ENCODE measurements at regions of chr1 and their contacts with region 1.

Region 1: DNA sequence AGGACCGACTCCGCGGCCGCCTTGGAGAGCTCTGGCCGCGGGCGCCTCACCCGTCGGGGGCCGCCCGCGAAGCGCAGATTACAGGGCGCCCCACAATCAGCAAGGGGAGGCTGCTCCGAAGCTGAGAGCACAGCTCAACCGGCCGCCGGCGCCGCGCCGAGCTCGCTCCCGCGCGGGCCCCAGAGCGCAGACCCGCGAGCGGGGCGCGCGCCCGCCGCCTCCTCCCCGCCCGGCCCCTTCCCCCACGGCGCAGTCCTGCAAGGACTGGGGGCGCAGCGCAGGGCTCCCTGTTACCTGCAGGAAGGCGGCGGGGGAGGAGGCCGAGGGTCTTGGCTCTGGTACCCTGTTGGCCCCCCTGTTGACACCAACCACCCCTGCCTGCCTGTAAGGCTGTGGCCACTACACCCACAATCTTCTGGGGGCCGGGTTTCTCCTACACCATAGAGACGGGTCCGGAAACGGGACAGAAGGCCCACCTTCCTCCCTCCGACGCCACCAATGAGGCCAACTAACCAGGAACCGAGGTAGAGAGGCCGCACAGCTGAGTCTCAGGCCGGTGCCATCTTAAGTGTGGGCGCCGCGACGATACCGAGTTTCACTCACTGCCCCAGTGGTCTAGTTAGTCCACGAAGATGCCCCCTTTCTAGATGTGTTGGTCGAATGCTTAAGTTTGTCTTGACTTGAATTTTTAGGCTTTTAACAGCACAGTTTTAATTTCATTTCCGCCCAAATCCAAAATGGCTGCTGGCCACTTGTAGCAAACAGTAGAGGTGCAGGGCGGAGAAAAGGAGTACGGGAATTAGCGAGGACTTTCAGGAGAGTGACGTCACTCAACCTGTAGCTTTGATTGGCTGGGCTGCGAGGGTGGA is at the start of gene SCYL3:
- DNase-seq: peak; percentile 97 to 98 (median 98)
- ATAC-seq: peak; percentile 95
- H3K4me3 ChIP-seq: peak within 1 kb of the TSS; percentile 69
- H3K27ac ChIP-seq: peak within 1 kb of the TSS; percentile 98
- H3K4me1 ChIP-seq: peaks cover 3 to 27% of the 10 kb centered on the region in 2 experiments
- H3K27me3 ChIP-seq: no peaks in the 10 kb centered on the region
- CTCF ChIP-seq: no peak
- EP300 ChIP-seq: no peak
- POLR2A ChIP-seq: peak; percentile 89
- RAD21 ChIP-seq: no peak; a peak in 1 of 4 replicates
- polyA plus RNA-seq, gene SCYL3: 3.6 to 5.7 TPM

Region 2: GRCh38 chr1:169485544-169486278 is 408.0 kb before region 1 on chr1 and contains the start of gene SLC19A2:
- CTCF ChIA-PET with region 1: no interaction called
- POLR2A ChIA-PET with region 1: no interaction called
- in situ Hi-C with region 1: no loop called
- intact Hi-C with region 1: loop called (anchors 5 kb)
- DNase-seq: peak; percentile 100
- ATAC-seq: peak; percentile 95
- H3K4me3 ChIP-seq: peak within 1 kb of the TSS; percentile 79
- H3K27ac ChIP-seq: peak within 1 kb of the TSS; percentile 89
- H3K4me1 ChIP-seq: peaks cover 13 to 23% of the 10 kb centered on the region in 2 experiments; a peak in 4 of 5 replicates
- H3K27me3 ChIP-seq: no peaks in the 10 kb centered on the region
- CTCF ChIP-seq: peak; percentile 58 to 72 (median 65)
- EP300 ChIP-seq: no peak
- POLR2A ChIP-seq: peak; percentile 96
- RAD21 ChIP-seq: peak; percentile 37 to 44
- polyA plus RNA-seq, gene SLC19A2: 7.4 to 8.9 TPM

Region 3: DNA sequence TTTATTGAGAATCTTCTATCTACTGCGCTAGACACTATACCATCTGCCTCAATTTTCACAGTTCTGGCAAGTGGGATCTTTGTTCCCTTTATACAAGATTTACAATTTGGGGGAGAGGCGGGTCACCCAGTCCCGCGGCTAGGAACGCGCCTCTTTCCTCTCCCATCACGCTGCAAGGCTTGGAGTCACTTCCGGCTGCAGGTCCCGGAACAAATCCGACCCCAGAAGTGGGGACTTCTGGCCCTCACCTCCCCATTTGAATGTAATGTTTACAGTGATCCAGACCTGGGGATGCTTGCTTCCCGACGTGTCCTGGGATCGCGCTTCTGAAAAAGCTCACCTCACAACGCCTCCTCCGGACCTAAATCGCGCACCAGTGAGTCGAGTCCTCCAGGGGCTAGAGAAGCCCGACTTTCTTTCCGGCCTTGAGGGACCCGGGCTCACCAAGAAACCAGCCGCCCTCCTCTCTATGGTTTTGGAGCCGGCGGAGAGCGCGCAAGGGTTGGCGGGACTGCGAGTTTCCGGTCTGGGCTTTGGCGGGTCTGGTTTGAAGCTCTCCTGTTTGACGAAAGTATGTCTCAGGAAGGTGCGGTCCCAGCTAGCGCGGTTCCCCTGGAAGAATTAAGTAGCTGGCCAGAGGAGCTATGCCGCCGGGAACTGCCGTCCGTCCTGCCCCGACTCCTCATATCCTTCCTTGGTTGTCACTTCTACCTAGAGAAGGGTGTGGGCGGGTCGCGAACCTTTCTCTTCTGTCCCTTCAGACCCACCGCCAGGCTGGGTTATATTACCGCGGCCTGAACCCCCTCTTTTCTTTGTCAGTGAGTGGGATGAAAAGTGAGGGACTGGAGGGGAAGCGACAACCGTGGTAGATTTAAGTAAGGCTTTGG is 99.0 kb before region 1 on chr1 and contains the start of gene METTL18:
- CTCF ChIA-PET with region 1: no interaction called
- POLR2A ChIA-PET with region 1: interaction called, 3 read pairs
- in situ Hi-C with region 1: no loop called
- intact Hi-C with region 1: loop called (anchors 1 kb)
- DNase-seq: peak; percentile 94 to 98 (median 95)
- ATAC-seq: peak; percentile 98
- H3K4me3 ChIP-seq: peak within 1 kb of the TSS; percentile 65
- H3K27ac ChIP-seq: peak within 1 kb of the TSS; percentile 85
- H3K4me1 ChIP-seq: peaks cover 0 to 8% of the 10 kb centered on the region in 2 experiments; a peak in 2 of 5 replicates
- H3K27me3 ChIP-seq: no peaks in the 10 kb centered on the region
- CTCF ChIP-seq: peak in 1 of 3 experiments; percentile 9; a peak in 1 of 6 replicates
- EP300 ChIP-seq: peak; percentile 59; the same call in 1 of the 2 replicates
- POLR2A ChIP-seq: peak; percentile 93
- RAD21 ChIP-seq: no peak
- polyA plus RNA-seq, gene METTL18: 36.4 to 40.2 TPM

Region 4: GRCh38 chr1:169906938-169907337 is 13.2 kb after region 1 on chr1:
- CTCF ChIA-PET with region 1: no interaction called
- POLR2A ChIA-PET with region 1: interaction called, 12 read pairs
- in situ Hi-C with region 1: no loop called
- intact Hi-C with region 1: no loop called
- DNase-seq: no peak
- ATAC-seq: no peak
- H3K4me3 ChIP-seq: no peak overlapping the region
- H3K27ac ChIP-seq: no peak overlapping the region
- H3K4me1 ChIP-seq: peaks cover 0 to 3% of the 10 kb centered on the region in 2 experiments; a peak in 1 of 5 replicates
- H3K27me3 ChIP-seq: peaks cover 0 to 5% of the 10 kb centered on the region in 2 experiments; a peak in 2 of 5 replicates
- CTCF ChIP-seq: no peak
- EP300 ChIP-seq: no peak
- POLR2A ChIP-seq: no peak
- RAD21 ChIP-seq: no peak

Region 5: GRCh38 chr1:170074250-170075157 is 180.8 kb after region 1 on chr1 and contains the start of gene KIFAP3:
- CTCF ChIA-PET with region 1: no interaction called
- POLR2A ChIA-PET with region 1: no interaction called
- in situ Hi-C with region 1: no loop called
- intact Hi-C with region 1: loop called (anchors 5 kb)
- DNase-seq: peak; percentile 95 to 100 (median 97)
- ATAC-seq: peak; percentile 99
- H3K4me3 ChIP-seq: peak within 1 kb of the TSS; percentile 59
- H3K27ac ChIP-seq: peak within 1 kb of the TSS; percentile 54
- H3K4me1 ChIP-seq: peaks cover 6% of the 10 kb centered on the region in 2 experiments; a peak in 4 of 5 replicates
- H3K27me3 ChIP-seq: no peaks in the 10 kb centered on the region
- CTCF ChIP-seq: peak; percentile 56 to 75 (median 75)
- EP300 ChIP-seq: no peak
- POLR2A ChIP-seq: peak; percentile 65
- RAD21 ChIP-seq: peak; percentile 56 to 65
- polyA plus RNA-seq, gene KIFAP3: 11.7 to 16.3 TPM

Region 6: DNA sequence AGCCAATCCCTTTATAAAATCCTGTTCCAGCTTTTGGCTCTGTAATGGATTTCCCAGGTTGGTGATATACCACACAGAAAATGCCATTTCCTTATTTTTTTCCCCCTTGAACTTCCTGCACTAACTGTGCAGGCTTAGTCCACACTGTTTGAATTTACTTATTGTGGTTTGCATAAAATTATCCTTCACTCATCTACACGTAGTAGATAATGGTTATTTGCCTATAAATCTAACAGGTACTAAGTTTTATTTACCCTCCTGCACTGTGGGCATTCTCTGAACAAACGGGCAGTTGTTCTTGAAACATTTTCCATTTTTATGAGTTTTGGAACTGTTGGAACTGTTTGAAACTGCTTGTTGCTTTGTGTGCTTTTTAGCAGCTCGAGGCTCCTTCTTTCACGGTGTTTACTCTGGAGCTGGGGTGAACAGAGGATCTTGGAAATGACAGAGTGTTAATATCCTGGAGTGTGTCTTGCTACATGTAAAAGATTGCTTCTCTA is 203.8 kb after region 1 on chr1:
- CTCF ChIA-PET with region 1: no interaction called
- POLR2A ChIA-PET with region 1: no interaction called
- in situ Hi-C with region 1: no loop called
- intact Hi-C with region 1: no loop called
- DNase-seq: no peak
- ATAC-seq: no peak
- H3K4me3 ChIP-seq: no peak overlapping the region
- H3K27ac ChIP-seq: no peak overlapping the region
- H3K4me1 ChIP-seq: no peaks in the 10 kb centered on the region
- H3K27me3 ChIP-seq: no peaks in the 10 kb centered on the region
- CTCF ChIP-seq: no peak
- EP300 ChIP-seq: no peak
- POLR2A ChIP-seq: no peak
- RAD21 ChIP-seq: no peak

Region 7: DNA sequence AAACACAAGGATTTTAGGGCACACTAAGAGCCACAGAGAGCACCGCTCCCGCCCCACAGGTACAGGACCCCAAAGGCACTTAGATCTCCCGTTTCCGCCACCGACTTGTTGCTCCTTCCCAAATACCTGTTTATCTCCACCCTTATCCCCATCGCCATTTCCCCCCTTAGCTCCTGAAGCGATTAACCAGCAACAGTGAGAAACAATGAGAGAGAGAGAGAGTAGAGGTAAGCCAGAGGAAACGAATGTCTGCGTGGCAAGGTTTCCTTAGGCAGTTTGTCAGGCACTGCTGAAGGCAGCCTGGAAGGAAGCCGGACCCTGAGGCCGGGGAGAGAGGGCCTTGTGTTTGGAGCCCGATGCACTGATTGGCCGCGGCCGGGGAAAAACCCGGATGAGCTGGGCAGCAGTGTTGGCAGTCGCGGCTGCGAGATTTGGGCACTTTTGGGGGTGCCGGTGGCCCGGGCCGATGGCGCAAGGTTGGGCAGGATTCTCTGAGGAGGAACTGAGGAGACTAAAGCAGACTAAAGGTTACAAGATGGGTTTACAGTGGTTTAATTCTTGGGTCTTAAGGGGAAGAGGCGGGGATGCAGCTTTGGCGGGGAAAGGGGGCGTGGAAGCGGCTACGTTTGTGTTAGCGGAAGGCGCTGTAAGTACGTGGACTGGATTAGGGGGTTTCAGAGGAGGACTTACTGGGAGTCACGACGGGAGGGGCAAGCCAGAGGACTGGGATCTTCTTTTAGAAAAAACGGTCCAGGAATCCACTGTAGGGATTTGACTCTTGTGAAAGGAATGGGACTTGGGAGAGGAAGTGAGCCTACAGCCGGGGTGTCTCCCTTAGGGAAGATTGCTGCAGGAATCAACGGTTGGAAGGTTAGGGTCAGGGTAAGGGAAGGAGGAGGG is 638.3 kb after region 1 on chr1 and contains the start of gene GORAB:
- CTCF ChIA-PET with region 1: no interaction called
- POLR2A ChIA-PET with region 1: interaction called, 5 read pairs
- in situ Hi-C with region 1: no loop called
- intact Hi-C with region 1: loop called (anchors 5 kb)
- DNase-seq: peak; percentile 95 to 96 (median 96)
- ATAC-seq: peak; percentile 95
- H3K4me3 ChIP-seq: peak within 1 kb of the TSS; percentile 64
- H3K27ac ChIP-seq: peak within 1 kb of the TSS; percentile 95
- H3K4me1 ChIP-seq: peaks cover 0 to 9% of the 10 kb centered on the region in 2 experiments; a peak in 2 of 5 replicates
- H3K27me3 ChIP-seq: no peaks in the 10 kb centered on the region
- CTCF ChIP-seq: no peak
- EP300 ChIP-seq: no peak
- POLR2A ChIP-seq: peak; percentile 96
- RAD21 ChIP-seq: no peak
- polyA plus RNA-seq, gene GORAB: 4.4 to 8.9 TPM